Breast epithelium (tissue), 4 donors: ENCODE measurements at regions of chr5 and their contacts with region 1.

Region 1: GRCh38 chr5:162672030-162672429 is 604.5 kb downstream of the GABRG2 start:
- DNase-seq: no peak
- H3K4me3 ChIP-seq: no peak overlapping the region
- H3K27ac ChIP-seq: no peak overlapping the region
- H3K4me1 ChIP-seq: no peaks in the 10 kb centered on the region
- H3K27me3 ChIP-seq: no peaks in the 10 kb centered on the region
- CTCF ChIP-seq: no peak
- POLR2A ChIP-seq: no peak

Region 2: GRCh38 chr5:162641142-162641813 is 30.8 kb before region 1 on chr5:
- intact Hi-C with region 1: loop called (anchors 2 kb)
- DNase-seq: no peak
- H3K4me3 ChIP-seq: no peak overlapping the region
- H3K27ac ChIP-seq: no peak overlapping the region
- H3K4me1 ChIP-seq: no peaks in the 10 kb centered on the region
- H3K27me3 ChIP-seq: no peaks in the 10 kb centered on the region
- CTCF ChIP-seq: no peak
- POLR2A ChIP-seq: no peak

Region 3: DNA sequence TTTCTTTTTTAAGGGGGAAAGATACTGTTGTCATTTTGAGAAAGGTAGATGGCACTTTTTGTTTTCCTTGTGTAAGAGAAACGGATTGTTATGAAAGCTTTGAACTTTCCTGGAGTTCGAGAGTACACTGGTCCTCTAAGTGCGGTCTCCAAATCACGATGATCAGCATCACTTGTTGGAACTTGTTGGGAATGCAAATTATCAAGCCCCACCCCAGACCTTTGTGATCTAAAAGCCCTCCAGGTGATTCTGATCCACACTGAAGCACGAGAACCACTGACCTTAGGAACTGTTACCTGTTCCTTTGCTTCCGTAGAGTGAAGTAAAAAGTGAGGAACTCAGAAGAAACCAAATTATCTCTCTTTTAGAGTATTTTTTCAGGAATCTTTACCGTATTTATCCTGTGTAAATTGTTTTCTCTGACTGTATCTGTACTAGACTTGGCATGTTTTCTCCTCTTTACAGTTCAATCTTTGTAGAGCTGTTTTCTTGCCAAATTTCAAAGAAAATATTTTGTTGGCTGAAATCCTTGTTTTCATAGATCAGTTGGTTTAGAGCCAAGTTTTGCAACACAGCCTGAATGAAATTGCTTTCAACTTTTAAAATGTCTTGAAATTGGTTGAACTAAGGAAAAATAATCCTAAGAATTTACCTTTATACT is 837.4 kb after region 1 on chr5:
- intact Hi-C with region 1: no loop called
- DNase-seq: peak in 1 of 2 donors; percentile 55
- H3K4me3 ChIP-seq: peak overlapping the region; percentile 3 to 71 (median 35)
- H3K27ac ChIP-seq: peak overlapping the region; percentile 77 to 99
- H3K4me1 ChIP-seq: peaks cover 5 to 18% of the 10 kb centered on the region in 2 donors
- H3K27me3 ChIP-seq: no peaks in the 10 kb centered on the region
- CTCF ChIP-seq: no peak
- POLR2A ChIP-seq: no peak